ENCODE measurements at regions of chr2 and their contacts with region 1.

Region 1: GRCh38 chr2:2101924-2102323 is 229.2 kb downstream of the MYT1L start:
- DNase-seq: no peak
- ATAC-seq: no peak
- H3K4me3 ChIP-seq: no peak overlapping the region
- H3K27ac ChIP-seq: no peak overlapping the region
- H3K4me1 ChIP-seq: no peaks in the 10 kb centered on the region
- H3K27me3 ChIP-seq: no peaks in the 10 kb centered on the region
- CTCF ChIP-seq: peak in 1 of 5 experiments; percentile 20
- POLR2A ChIP-seq: no peak

Region 2: GRCh38 chr2:1781271-1782080 is 320.4 kb before region 1 on chr2:
- in situ Hi-C with region 1: no loop called
- intact Hi-C with region 1: no loop called
- DNase-seq: no peak
- ATAC-seq: no peak
- H3K4me3 ChIP-seq: no peak overlapping the region
- H3K27ac ChIP-seq: no peak overlapping the region
- H3K4me1 ChIP-seq: no peaks in the 10 kb centered on the region
- H3K27me3 ChIP-seq: no peaks in the 10 kb centered on the region
- CTCF ChIP-seq: no peak
- POLR2A ChIP-seq: no peak

Region 3: DNA sequence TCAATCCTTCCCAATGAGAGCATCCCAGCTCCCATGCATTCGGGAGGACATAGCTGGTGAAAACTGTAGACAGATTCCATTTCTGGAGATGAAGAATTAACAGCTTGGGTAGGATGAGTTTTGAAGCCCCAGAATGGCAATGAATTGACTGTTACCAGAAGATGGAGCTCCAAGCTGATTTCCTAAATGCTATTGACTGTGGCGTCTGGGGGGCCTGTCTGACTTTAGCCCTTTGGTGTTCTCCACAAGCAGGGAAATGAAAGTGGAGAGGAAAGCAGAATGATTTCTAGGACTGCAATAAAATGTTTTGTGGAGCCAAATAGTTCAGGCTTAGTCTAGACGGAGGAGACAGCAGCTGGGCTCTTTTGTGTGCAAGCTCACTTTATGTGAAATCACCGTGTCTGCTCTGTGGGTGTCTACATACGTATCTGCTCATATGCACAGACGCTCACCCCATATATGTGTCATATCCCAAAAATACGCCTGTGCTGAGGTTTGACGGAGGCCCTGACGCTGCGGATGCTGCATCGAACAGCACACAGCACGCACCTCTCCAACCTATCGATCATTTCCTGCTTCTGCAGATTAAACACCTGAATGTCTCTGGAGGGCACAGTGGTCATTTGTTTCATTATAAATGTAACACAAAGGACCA is 191.2 kb before region 1 on chr2:
- in situ Hi-C with region 1: no loop called
- intact Hi-C with region 1: loop called (anchors 10 kb)
- DNase-seq: no peak
- ATAC-seq: no peak
- H3K4me3 ChIP-seq: no peak overlapping the region
- H3K27ac ChIP-seq: no peak overlapping the region
- H3K4me1 ChIP-seq: no peaks in the 10 kb centered on the region
- H3K27me3 ChIP-seq: no peaks in the 10 kb centered on the region
- CTCF ChIP-seq: peak in 2 of 5 experiments; percentile 26 to 29
- POLR2A ChIP-seq: no peak

Region 4: DNA sequence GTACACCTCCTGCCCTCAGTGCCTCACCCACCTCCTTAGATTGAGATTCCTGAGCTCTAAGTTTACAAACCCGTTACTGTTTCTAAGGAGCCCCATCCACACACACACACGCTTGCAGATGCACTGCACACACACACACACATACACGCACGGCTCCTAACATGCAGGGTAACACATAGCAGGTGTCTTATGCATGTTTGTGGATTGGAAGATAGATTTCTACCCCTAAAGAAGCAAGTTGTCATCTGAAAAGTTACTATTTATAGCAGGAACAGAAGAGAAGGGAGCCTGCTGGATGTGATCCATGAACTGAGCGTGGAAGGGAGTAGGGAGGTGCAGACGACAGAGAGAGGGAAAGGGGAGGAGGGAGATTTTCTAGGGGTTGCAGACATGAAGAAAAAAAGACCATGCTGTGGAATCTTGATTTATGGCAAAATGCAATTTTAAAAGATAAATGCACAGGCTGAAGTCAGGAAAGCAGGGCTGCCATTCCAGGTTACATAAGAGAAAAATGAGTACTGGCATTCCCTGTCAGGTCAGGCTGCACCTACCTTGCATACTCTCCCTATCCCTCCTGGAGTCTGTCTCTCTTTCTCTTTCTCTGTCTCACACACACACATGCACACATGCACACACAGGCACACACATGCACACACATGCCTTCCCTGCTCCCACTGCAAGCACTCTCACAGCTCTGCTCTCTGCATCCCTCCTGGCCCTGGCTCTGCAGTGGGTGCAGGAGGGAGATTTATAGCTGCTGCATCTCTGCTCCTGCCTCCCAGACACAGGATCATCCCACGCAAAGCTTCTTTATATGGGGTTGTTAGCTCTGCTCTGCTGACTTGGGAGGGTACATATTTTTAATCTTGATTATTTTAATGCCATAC is 421.8 kb after region 1 on chr2:
- in situ Hi-C with region 1: no loop called
- intact Hi-C with region 1: no loop called
- DNase-seq: no peak
- ATAC-seq: no peak
- H3K4me3 ChIP-seq: no peak overlapping the region
- H3K27ac ChIP-seq: no peak overlapping the region
- H3K4me1 ChIP-seq: peaks cover 0 to 8% of the 10 kb centered on the region in 2 donors
- H3K27me3 ChIP-seq: no peaks in the 10 kb centered on the region
- CTCF ChIP-seq: no peak
- POLR2A ChIP-seq: no peak